ENCODE measurements at regions of chr5 and their contacts with region 1.

Region 1: GRCh38 chr5:179763215-179763945 is 30.4 kb upstream of the LTC4S start:
- DNase-seq: peak; percentile 62
- H3K4me3 Mint-ChIP-seq: no peak overlapping the region
- H3K27ac Mint-ChIP-seq: no peak overlapping the region
- H3K4me1 Mint-ChIP-seq: peaks cover 65% of the 10 kb centered on the region
- H3K27me3 Mint-ChIP-seq: no peaks in the 10 kb centered on the region

Region 2: DNA sequence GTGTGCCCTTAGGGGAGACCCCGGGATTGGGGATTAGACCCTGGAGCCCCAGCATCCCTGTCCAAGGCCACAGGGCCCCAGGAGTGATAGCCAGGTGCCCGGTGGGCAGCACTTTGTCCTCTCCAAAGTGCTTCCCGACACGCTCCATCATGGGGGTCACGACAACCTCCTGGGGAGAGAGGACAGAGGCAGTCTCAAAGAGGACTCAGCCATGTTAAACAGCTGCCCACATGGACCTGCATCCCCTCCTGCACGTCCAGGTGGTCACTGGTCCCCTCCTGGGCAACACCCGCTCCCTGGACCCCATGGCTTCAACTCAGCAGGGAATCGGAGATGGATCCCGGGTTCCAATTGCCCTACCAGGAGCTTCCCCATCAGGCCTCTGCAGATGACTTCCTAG is 119.8 kb before region 1 on chr5:
- CTCF ChIA-PET with region 1: no interaction called
- POLR2A ChIA-PET with region 1: no interaction called
- intact Hi-C with region 1: no loop called
- DNase-seq: no peak
- H3K4me3 Mint-ChIP-seq: no peak overlapping the region
- H3K27ac Mint-ChIP-seq: no peak overlapping the region
- H3K4me1 Mint-ChIP-seq: no peaks in the 10 kb centered on the region
- H3K27me3 Mint-ChIP-seq: peaks cover 2% of the 10 kb centered on the region

Region 3: GRCh38 chr5:179732417-179732917 is 30.9 kb before region 1 on chr5 and contains the start of gene MAML1:
- CTCF ChIA-PET with region 1: interaction called, 61 read pairs
- POLR2A ChIA-PET with region 1: interaction called, 4 read pairs
- intact Hi-C with region 1: loop called (anchors 1 kb)
- DNase-seq: peak; percentile 100
- H3K4me3 Mint-ChIP-seq: peak within 1 kb of the TSS; percentile 98
- H3K27ac Mint-ChIP-seq: peak within 1 kb of the TSS; percentile 92
- H3K4me1 Mint-ChIP-seq: peaks cover 42% of the 10 kb centered on the region
- H3K27me3 Mint-ChIP-seq: no peaks in the 10 kb centered on the region
- total RNA-seq, gene MAML1: 20.3 to 22.2 TPM

Region 4: DNA sequence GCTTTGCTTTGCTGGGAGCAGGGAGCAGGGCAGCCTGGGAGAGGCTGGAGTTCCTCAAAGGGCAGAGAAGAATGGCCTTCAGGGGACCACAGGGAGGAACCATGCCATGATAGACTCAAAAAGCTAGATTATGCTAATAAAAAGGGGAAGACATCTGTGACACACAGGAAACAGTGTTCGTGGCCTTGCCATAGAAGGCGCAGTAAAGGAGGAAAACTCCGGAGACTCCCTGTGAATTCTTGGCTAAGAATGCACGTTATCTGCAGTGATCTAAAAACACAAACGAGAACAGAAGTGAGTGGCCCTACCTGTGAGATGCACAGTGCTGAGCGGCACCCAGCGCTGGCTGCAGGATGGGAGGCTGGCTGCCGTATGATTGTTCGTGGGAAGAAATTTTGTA is 14.5 kb after region 1 on chr5:
- CTCF ChIA-PET with region 1: interaction called, 19 read pairs
- POLR2A ChIA-PET with region 1: no interaction called
- intact Hi-C with region 1: no loop called
- DNase-seq: no peak
- H3K4me3 Mint-ChIP-seq: no peak overlapping the region
- H3K27ac Mint-ChIP-seq: no peak overlapping the region
- H3K4me1 Mint-ChIP-seq: no peaks in the 10 kb centered on the region
- H3K27me3 Mint-ChIP-seq: no peaks in the 10 kb centered on the region

Region 5: GRCh38 chr5:179795863-179796833 is 32.8 kb after region 1 on chr5:
- CTCF ChIA-PET with region 1: interaction called, 46 read pairs
- POLR2A ChIA-PET with region 1: interaction called, 6 read pairs
- intact Hi-C with region 1: loop called (anchors 2 kb)
- DNase-seq: peak; percentile 81
- H3K4me3 Mint-ChIP-seq: peak overlapping the region; percentile 39
- H3K27ac Mint-ChIP-seq: peak overlapping the region; percentile 30
- H3K4me1 Mint-ChIP-seq: peaks cover 25% of the 10 kb centered on the region
- H3K27me3 Mint-ChIP-seq: no peaks in the 10 kb centered on the region

Region 6: DNA sequence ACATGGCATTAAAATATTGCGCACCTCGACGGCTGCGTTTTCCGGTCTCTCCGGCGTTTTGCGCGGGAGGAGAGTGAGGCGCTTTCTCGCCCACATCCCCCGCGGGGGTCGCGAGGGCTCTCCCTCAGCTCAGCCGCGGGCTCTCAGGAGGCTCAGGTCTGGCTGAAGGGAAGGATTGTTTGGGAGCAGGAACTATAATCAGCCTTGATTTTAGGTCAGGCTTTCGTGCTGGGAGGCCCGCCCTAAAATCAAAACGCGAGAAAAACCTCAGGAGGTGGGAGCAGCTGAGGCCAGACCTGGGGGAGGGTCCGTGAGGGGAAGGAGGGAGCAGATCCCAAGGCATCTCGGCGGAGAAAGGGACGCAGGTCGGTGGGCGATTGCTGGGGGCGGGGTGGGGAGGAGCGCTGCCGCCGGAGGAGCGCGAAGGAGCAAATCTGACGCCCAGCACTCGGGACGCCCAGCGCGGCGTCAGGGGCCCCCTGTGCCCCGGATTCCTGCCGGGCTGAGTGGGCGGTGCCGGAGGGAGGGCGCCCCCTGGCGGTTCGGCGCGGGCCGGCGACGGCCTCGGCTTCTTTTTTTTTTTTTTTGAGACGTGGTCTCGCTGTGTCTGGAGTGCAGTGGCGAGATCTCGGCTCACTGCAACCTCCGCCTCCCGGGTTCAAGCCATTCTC is 326.9 kb after region 1 on chr5:
- CTCF ChIA-PET with region 1: no interaction called
- POLR2A ChIA-PET with region 1: no interaction called
- intact Hi-C with region 1: loop called (anchors 2 kb)
- DNase-seq: peak; percentile 87
- H3K4me3 Mint-ChIP-seq: peak overlapping the region; percentile 75
- H3K27ac Mint-ChIP-seq: peak overlapping the region; percentile 43
- H3K4me1 Mint-ChIP-seq: peaks cover 15% of the 10 kb centered on the region
- H3K27me3 Mint-ChIP-seq: no peaks in the 10 kb centered on the region

Measured in activated CD4-positive, alpha-beta memory T cell treated with anti-CD3 and anti-CD28 coated beads for 36 hours (primary cell).